Activated naive CD4-positive, alpha-beta T cell treated with anti-CD3 and anti-CD28 coated beads for 36 hours (primary cell): ENCODE measurements at regions of chr6 and their contacts with region 1.

Region 1: DNA sequence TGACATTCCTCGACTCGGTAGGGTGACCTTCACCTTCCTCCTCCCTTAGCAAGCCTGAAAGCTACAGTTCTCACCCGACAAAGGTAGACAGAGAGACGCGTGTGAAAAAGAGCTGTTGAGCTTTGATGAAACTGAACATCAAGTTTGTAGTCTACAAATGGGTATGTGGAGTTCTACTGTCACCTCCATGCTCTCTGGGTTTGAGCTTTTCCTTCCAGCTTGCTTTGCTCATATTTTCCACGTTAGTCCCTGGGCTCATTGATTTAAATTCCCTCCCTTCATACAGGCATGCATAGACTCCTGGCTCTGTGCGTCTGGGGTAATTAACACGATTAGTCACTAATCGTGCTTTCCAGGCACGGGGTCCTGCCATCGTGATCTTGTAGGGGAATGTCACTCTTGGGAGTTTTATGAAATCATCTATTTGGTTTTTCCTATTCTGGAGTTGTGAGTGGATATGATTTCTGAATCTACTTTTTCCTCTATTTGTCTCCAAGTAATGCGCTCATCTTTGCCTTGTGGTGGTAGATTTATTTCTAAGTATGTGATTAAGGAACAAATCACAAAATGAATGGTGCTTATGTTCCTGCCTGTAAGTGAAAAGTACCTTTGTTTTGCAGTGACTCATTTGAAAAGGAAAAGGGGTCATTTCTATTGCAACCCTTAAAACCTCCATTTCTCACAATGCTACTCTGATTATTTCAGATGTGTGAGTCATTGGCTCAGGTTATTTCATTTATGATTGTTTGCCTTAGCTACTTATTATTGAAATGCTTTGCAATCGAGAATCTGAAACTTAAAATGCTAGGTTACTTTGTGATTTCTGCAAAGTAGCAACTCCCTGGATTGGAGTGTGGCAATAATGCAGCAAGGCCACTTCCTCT is 154.6 kb downstream of the ZDHHC14 start:
- DNase-seq: peak; percentile 59
- H3K4me3 Mint-ChIP-seq: no peak overlapping the region
- H3K27ac Mint-ChIP-seq: peak overlapping the region; percentile 56
- H3K4me1 Mint-ChIP-seq: peaks cover 24% of the 10 kb centered on the region
- H3K27me3 Mint-ChIP-seq: peaks cover 7% of the 10 kb centered on the region

Region 2: DNA sequence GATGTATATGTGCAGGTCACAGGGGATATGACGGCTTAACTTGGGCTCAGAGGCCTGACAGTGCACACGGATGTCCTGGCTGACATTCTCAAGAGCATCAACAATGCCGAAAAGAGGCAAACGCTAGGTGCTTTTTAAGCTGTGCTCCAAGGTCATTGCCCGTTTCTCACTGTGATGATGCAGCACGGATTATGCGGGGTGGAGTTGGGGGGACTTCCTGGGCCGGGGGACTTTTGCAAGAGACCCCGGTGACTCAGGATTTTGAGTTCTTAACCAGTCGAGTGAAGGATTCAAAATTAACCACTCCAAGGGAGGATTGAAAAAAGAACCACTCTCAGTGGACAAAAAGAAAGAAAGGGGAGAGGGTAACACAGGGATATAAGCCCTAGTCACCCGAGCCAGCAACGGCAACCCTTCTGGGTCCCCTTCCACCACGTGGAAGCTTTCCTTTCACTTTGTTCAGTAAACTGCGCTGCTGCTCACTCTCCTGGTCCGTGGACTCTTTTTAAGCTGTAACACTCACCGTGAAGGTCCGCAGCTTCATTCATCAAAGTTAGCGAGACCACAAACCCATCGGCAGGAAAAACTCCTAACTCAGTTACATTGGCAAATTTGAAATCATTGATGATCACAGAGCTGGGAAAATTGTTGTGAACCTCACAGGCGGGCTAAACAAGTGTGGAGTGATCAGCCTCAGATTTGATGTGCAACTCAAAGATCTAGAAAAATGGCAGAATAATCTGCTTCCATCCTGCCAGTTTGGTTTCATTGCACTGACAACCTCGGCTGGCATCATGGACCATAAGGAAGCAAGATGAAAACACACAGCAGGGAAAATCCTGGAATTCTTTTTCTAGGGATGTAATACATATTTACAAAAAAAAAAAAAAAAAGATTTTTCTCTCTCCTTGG is 559.1 kb before region 1 on chr6:
- CTCF ChIA-PET with region 1: no interaction called
- intact Hi-C with region 1: loop called (anchors 5 kb)
- DNase-seq: peak; percentile 48
- H3K4me3 Mint-ChIP-seq: peak overlapping the region; percentile 67
- H3K27ac Mint-ChIP-seq: peak overlapping the region; percentile 63
- H3K4me1 Mint-ChIP-seq: peaks cover 78% of the 10 kb centered on the region
- H3K27me3 Mint-ChIP-seq: no peaks in the 10 kb centered on the region

Region 3: GRCh38 chr6:157323255-157323965 is 212.2 kb before region 1 on chr6 and contains the start of gene TMEM242:
- CTCF ChIA-PET with region 1: no interaction called
- intact Hi-C with region 1: loop called (anchors 5 kb)
- DNase-seq: peak; percentile 94
- H3K4me3 Mint-ChIP-seq: peak within 1 kb of the TSS; percentile 94
- H3K27ac Mint-ChIP-seq: peak within 1 kb of the TSS; percentile 80
- H3K4me1 Mint-ChIP-seq: peaks cover 20% of the 10 kb centered on the region
- H3K27me3 Mint-ChIP-seq: peaks cover 23% of the 10 kb centered on the region
- total RNA-seq, gene TMEM242: 9.3 to 10.3 TPM

Region 4: DNA sequence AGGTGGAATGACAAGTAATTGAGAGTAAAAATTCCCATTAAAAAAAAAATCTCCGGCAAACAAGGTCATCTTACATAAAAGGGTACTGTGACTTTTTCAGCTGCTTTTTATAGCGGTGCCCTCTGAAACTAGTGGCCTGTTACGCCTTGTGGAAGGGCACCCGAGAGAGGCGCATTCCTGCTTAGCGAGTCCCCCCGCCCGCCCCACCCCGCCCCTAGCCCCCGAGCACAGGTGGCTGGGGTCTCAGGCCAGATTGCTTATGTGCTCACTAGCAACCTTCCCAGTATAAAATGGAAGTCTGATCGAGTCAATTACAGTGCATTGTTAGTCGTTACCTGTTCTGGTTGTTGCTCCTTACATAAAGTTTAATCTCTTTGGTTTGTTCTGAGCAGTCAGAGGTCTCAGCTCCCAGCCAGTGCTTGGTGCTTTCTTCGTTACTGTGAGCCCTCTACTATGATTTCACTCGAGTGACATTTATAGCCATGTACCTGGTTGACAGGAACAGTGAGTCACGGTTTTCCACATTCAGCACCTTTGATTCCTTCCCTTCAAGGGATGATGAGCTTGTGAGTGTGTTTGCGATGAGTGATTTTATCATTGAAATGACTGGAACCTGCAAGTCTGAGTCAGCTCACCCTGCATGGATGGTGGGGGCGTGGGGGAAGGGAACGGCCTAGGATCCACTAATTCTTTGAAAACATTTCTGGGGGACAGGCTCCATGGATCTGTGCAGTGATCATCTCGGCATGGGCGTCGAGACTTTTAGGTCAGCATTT is 107.0 kb before region 1 on chr6:
- CTCF ChIA-PET with region 1: no interaction called
- intact Hi-C with region 1: loop called (anchors 1 kb)
- DNase-seq: peak; percentile 94
- H3K4me3 Mint-ChIP-seq: peak overlapping the region; percentile 43
- H3K27ac Mint-ChIP-seq: peak overlapping the region; percentile 90
- H3K4me1 Mint-ChIP-seq: peaks cover 43% of the 10 kb centered on the region
- H3K27me3 Mint-ChIP-seq: no peaks in the 10 kb centered on the region

Region 5: GRCh38 chr6:157550114-157550989 is 14.8 kb after region 1 on chr6:
- CTCF ChIA-PET with region 1: no interaction called
- intact Hi-C with region 1: loop called (anchors 1 kb)
- DNase-seq: peak; percentile 66
- H3K4me3 Mint-ChIP-seq: no peak overlapping the region
- H3K27ac Mint-ChIP-seq: no peak overlapping the region
- H3K4me1 Mint-ChIP-seq: peaks cover 19% of the 10 kb centered on the region
- H3K27me3 Mint-ChIP-seq: peaks cover 3% of the 10 kb centered on the region